SK-N-SH (cell line): ENCODE measurements at regions of chr20 and their contacts with region 1.

Region 1: DNA sequence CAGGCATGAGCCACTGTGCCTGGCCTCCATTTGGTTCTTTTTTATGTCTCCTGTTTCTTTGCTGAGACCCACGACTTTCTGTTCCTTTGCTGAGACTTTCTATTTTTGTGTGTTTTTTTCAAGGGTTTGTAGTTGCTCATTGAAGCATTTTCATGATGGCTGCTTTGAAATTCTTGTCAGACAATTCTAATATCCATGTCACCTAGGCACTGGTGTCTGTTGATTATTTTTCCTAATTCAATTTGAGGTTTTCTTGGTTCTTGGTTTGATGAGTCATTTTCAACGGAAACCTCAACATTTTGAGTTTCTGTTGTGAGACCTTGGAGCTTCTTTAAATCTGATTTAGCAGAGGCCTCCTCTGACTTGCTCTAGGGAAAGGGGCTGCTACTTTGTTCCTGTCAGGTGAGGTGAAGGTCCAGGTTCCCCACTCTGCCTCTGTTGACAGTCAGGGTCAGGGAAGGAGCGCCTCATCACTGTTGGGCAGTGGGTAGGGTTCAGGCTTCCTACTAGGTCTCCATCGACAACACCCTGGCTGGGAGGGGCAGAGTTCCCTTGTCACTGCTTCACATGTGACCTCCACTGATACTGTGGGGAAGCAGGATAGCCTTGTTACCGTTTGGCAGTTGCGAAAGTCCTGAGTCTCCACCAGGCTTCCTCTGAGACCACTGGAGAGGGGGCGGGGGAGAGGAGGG is 67.2 kb upstream of the RNF24 start:
- DNase-seq: peak; percentile 32
- H3K4me3 ChIP-seq: no peak overlapping the region; a peak in 1 of 4 replicates
- H3K27ac ChIP-seq: peak overlapping the region; percentile 75 to 98; a peak in 3 of 4 replicates
- H3K4me1 ChIP-seq: peaks cover 13 to 18% of the 10 kb centered on the region in 2 experiments; a peak in 3 of 4 replicates
- H3K27me3 ChIP-seq: no peaks in the 10 kb centered on the region
- CTCF ChIP-seq: no peak
- EP300 ChIP-seq: peak in 1 of 2 experiments; percentile 86; a peak in 1 of 4 replicates
- RAD21 ChIP-seq: no peak

Region 2: GRCh38 chr20:3888622-3889488 is 193.7 kb before region 1 on chr20 and contains the start of gene PANK2:
- CTCF ChIA-PET with region 1: interaction called, 14 read pairs
- POLR2A ChIA-PET with region 1: interaction called, 6 read pairs
- DNase-seq: peak; percentile 99
- H3K4me3 ChIP-seq: peak within 1 kb of the TSS; percentile 81 to 100
- H3K27ac ChIP-seq: peak within 1 kb of the TSS; percentile 96
- H3K4me1 ChIP-seq: peaks cover 10 to 15% of the 10 kb centered on the region in 2 experiments
- H3K27me3 ChIP-seq: no peaks in the 10 kb centered on the region
- CTCF ChIP-seq: peak; percentile 52
- EP300 ChIP-seq: 0 out of 4 replicates have a peak, but pooled peaks have one; percentile 11 to 13
- RAD21 ChIP-seq: peak; percentile 68
- polyA plus RNA-seq, gene PANK2: 17.7 and 23.3 TPM in 2 replicates

Region 3: GRCh38 chr20:3993109-3993508 is 89.4 kb before region 1 on chr20:
- CTCF ChIA-PET with region 1: interaction called, 11 read pairs
- POLR2A ChIA-PET with region 1: no interaction called
- DNase-seq: no peak
- H3K4me3 ChIP-seq: no peak overlapping the region
- H3K27ac ChIP-seq: no peak overlapping the region
- H3K4me1 ChIP-seq: peaks cover 3 to 24% of the 10 kb centered on the region in 2 experiments; a peak in 3 of 4 replicates
- H3K27me3 ChIP-seq: no peaks in the 10 kb centered on the region
- CTCF ChIP-seq: no peak
- EP300 ChIP-seq: no peak
- RAD21 ChIP-seq: no peak

Region 4: DNA sequence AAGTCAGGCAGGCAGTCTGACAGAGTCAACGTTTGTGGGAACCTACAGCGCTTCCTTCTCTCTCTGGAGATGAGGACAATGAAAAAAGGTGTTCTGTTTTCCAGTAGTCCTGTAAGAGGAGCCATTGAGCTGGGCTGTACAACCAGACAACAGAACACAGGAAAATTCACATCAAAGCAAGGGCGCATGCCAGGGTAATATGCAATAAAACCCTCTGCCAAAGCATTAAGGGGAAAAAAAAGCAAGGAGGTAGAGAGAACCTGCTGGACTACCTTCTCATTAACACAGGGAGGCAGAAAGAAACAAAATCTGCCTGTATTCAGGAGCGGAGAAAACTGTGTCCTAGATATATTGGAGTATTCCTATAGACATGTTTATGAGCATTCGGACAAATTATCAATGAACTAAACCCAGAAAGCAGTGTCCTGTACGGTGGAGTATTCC is 68.5 kb before region 1 on chr20:
- CTCF ChIA-PET with region 1: interaction called, 46 read pairs
- POLR2A ChIA-PET with region 1: no interaction called
- DNase-seq: peak; percentile 61
- H3K4me3 ChIP-seq: peak overlapping the region; percentile 91
- H3K27ac ChIP-seq: peak overlapping the region; percentile 61 to 70
- H3K4me1 ChIP-seq: peaks cover 4 to 7% of the 10 kb centered on the region in 2 experiments; a peak in 1 of 4 replicates
- H3K27me3 ChIP-seq: no peaks in the 10 kb centered on the region
- CTCF ChIP-seq: peak; percentile 75
- EP300 ChIP-seq: no peak
- RAD21 ChIP-seq: peak; percentile 87

Region 5: DNA sequence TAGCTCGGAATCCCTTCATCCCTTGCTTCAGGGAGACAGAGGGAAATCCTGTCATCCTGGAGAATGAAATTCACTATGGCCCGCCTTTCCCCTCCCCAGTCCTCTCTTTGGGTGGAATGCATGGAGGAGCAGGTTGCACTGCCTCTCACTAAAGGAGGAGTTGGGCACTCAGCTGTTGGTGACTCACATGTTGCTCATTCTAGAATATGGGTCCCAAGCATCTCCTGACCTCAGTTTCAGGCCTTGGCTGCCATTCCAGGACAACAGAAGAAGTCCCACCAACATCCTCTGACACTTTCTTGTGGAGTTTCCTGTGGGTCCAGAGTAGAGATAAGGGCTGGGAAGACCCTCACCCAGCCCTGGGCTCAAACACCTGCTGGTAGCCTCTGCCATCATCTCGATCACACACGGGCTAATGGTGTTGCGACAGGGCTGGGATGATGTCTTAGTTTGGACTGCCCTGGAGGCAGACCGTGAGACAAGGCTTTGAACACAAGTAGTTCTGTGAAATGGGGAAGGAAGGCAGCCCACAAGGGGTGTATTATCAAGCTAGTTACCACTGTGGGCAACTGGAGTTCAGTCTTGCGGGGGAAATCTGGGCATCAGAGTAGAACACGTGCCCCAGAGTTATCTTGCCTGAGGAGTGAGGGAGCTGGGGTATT is 14.8 kb before region 1 on chr20:
- CTCF ChIA-PET with region 1: interaction called, 82 read pairs
- POLR2A ChIA-PET with region 1: no interaction called
- DNase-seq: no peak
- H3K4me3 ChIP-seq: no peak overlapping the region
- H3K27ac ChIP-seq: peak overlapping the region in 1 of 2 experiments; percentile 94; a peak in 2 of 4 replicates
- H3K4me1 ChIP-seq: peaks cover 19 to 43% of the 10 kb centered on the region in 2 experiments
- H3K27me3 ChIP-seq: no peaks in the 10 kb centered on the region
- CTCF ChIP-seq: no peak
- EP300 ChIP-seq: peak in 1 of 2 experiments; percentile 33; a peak in 1 of 4 replicates
- RAD21 ChIP-seq: no peak

Region 6: GRCh38 chr20:4095639-4096038 is 13.1 kb after region 1 on chr20:
- CTCF ChIA-PET with region 1: interaction called, 11 read pairs
- POLR2A ChIA-PET with region 1: no interaction called
- DNase-seq: no peak
- H3K4me3 ChIP-seq: no peak overlapping the region
- H3K27ac ChIP-seq: no peak overlapping the region
- H3K4me1 ChIP-seq: peaks cover 0 to 5% of the 10 kb centered on the region in 2 experiments; a peak in 1 of 4 replicates
- H3K27me3 ChIP-seq: no peaks in the 10 kb centered on the region
- CTCF ChIP-seq: no peak
- EP300 ChIP-seq: no peak
- RAD21 ChIP-seq: no peak

Region 7: GRCh38 chr20:4100679-4101078 is 18.1 kb after region 1 on chr20:
- CTCF ChIA-PET with region 1: interaction called, 11 read pairs
- POLR2A ChIA-PET with region 1: no interaction called
- DNase-seq: no peak
- H3K4me3 ChIP-seq: no peak overlapping the region
- H3K27ac ChIP-seq: peak overlapping the region in 1 of 2 experiments; percentile 32; a peak in 2 of 4 replicates
- H3K4me1 ChIP-seq: no peaks in the 10 kb centered on the region
- H3K27me3 ChIP-seq: no peaks in the 10 kb centered on the region
- CTCF ChIP-seq: no peak
- EP300 ChIP-seq: no peak
- RAD21 ChIP-seq: no peak

Region 8: GRCh38 chr20:4297127-4297826 is 214.7 kb after region 1 on chr20:
- CTCF ChIA-PET with region 1: no interaction called
- POLR2A ChIA-PET with region 1: no interaction called
- DNase-seq: no peak
- H3K4me3 ChIP-seq: peak overlapping the region in 1 of 2 experiments; percentile 15; a peak in 1 of 4 replicates
- H3K27ac ChIP-seq: peak overlapping the region in 1 of 2 experiments; percentile 42; a peak in 2 of 4 replicates
- H3K4me1 ChIP-seq: peaks cover 0 to 8% of the 10 kb centered on the region in 2 experiments; a peak in 1 of 4 replicates
- H3K27me3 ChIP-seq: no peaks in the 10 kb centered on the region
- CTCF ChIP-seq: no peak
- EP300 ChIP-seq: no peak
- RAD21 ChIP-seq: no peak